ENCODE measurements at regions of chr11 and their contacts with region 1.

Region 1: GRCh38 chr11:59560702-59561469 is 49.5 kb downstream of the OR4D9 start:
- DNase-seq: peak; percentile 87 to 93
- ATAC-seq: peak; percentile 87 to 90 (median 88)
- H3K4me3 ChIP-seq: peak overlapping the region; percentile 74
- H3K27ac ChIP-seq: peak overlapping the region; percentile 90
- H3K4me1 ChIP-seq: peaks cover 5% of the 10 kb centered on the region
- H3K27me3 ChIP-seq: no peaks in the 10 kb centered on the region
- CTCF ChIP-seq: no peak

Region 2: GRCh38 chr11:59615637-59616395 is 54.9 kb after region 1 on chr11 and contains the start of gene OSBP:
- intact Hi-C with region 1: loop called (anchors 2 to 5 kb)
- DNase-seq: peak; percentile 99 to 100
- ATAC-seq: peak; percentile 86 to 91 (median 86)
- H3K4me3 ChIP-seq: peak within 1 kb of the TSS; percentile 92
- H3K27ac ChIP-seq: peak within 1 kb of the TSS; percentile 98
- H3K4me1 ChIP-seq: peaks cover 34% of the 10 kb centered on the region
- H3K27me3 ChIP-seq: no peaks in the 10 kb centered on the region
- CTCF ChIP-seq: no peak
- total RNA-seq, gene OSBP: 43.3 to 51.2 (median 48.6) TPM